Cardiac septum (tissue), 1 donor: ENCODE measurements at regions of chr1 and their contacts with region 1.

Region 1: GRCh38 chr1:6624710-6625583 is at the start of gene THAP3:
- DNase-seq: peak; percentile 95
- total RNA-seq, gene THAP3: 8.8 TPM

Region 2: GRCh38 chr1:6569033-6569432 is 55.9 kb before region 1 on chr1:
- intact Hi-C with region 1: no loop called
- DNase-seq: no peak

Region 3: DNA sequence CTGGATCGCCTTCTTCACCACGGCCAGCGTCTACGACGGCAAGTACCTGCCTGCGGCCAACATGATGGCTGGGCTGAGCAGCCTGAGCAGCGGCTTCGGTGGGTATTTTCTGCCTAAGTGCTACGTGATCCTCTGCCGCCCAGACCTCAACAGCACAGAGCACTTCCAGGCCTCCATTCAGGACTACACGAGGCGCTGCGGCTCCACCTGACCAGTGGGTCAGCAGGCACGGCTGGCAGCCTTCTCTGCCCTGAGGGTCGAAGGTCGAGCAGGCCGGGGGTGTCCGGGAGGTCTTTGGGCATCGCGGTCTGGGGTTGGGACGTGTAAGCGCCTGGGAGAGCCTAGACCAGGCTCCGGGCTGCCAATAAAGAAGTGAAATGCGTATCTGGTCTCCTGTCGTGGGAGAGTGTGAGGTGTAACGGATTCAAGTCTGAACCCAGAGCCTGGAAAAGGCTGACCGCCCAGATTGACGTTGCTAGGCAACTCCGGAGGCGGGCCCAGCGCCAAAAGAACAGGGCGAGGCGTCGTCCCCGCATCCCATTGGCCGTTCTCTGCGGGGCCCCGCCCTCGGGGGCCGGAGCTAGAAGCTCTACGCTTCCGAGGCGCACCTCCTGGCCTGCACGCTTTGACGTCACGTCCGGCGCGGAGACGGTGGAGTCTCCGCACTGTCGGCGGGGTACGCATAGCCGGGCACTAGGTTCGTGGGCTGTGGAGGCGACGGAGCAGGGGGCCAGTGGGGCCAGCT is 45.4 kb before region 1 on chr1 and contains the start of gene ZBTB48:
- intact Hi-C with region 1: loop called (anchors 2 kb)
- DNase-seq: peak; percentile 100
- total RNA-seq, gene ZBTB48: 10.7 TPM

Region 4: DNA sequence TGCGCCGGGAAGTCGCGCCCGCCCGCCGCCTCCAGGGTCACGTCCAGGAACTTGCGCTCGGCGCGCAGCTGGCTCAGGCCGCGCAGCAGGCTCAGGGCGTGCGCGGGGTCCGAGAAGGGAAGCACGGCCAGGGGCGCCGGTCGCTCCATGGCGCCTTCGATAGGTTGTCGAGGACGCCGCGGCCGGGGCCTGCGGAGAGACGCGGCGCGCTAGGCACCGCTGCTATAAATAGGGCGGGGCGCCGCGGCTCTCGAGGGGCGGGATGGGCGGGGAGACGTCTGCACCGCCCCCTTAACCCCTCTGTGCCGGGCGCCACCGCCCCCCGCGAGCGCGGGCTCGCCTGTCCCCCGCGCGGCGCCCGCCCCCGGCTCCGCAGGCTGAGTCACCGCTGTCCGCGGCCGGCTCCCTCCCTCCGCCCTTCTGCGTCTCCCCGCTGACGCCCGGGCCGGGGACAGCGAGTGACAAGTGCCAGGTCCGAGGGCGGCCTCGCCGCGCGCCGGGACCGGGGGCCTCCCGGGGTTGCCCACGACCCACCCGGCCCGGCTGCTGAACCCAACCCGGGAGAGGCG is 22.2 kb before region 1 on chr1 and contains the start of gene KLHL21:
- intact Hi-C with region 1: loop called (anchors 2 kb)
- DNase-seq: peak; percentile 95
- total RNA-seq, gene KLHL21: 33.1 TPM

Region 5: DNA sequence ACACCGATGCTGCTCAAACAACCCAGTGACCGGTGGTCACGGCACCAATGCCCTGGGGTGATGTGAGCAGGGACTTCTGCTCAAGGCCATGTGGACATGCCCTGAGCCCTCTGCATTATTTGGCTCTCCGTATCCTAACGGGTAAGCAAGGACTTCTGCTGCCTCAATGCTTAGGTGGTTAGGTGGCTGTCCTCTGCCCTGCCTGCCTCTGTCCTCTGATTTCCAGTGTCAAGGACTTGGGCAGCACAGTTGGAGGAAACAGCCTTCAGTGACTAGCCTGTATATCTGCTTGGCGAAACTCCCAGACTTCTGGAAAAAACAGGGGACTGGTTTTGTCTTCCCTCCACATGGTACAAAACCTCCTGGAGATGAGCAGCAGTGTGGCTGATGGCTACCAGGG is 42.2 kb after region 1 on chr1:
- intact Hi-C with region 1: no loop called
- DNase-seq: peak; percentile 75

Region 6: DNA sequence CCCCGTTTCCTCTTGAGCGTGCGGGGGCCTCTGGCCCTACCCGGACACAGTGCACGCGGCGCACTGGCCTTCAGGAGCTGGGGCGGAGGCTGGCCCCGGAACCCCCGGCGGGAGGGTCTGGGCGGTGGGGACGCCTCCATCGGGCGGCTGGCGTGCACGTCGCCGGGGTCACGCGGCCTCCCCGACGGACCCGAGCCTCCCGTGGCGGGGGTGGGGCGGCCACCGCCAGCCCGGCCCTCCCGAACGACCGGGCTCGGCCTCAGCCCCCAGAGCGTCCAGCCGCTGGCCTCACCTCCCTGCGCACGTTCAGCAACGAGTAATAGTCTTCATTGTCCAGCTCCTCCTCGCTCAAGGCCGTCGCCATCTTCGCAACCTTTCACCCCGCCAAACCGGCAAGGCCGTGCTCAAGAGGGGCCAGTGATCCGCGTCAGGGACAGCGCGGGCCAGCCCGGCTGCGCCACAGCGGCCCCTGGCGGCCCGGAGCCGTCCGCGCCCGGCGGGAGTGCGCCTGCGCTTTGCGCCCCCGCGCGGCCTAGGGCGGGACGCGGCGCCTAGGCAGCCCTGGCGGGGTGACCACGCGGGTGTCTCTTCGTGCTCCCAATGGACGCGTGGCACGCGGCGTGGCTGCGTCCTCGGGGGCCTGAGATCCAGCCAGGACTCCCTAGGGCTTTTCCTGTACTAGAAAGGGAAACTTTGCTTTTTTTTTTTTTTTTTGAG is 76.6 kb after region 1 on chr1 and contains the start of gene DNAJC11:
- intact Hi-C with region 1: loop called (anchors 5 kb)
- DNase-seq: peak; percentile 96
- total RNA-seq, gene DNAJC11: 49.4 TPM